ENCODE measurements at regions of chr17 and their contacts with region 1.

Region 1: DNA sequence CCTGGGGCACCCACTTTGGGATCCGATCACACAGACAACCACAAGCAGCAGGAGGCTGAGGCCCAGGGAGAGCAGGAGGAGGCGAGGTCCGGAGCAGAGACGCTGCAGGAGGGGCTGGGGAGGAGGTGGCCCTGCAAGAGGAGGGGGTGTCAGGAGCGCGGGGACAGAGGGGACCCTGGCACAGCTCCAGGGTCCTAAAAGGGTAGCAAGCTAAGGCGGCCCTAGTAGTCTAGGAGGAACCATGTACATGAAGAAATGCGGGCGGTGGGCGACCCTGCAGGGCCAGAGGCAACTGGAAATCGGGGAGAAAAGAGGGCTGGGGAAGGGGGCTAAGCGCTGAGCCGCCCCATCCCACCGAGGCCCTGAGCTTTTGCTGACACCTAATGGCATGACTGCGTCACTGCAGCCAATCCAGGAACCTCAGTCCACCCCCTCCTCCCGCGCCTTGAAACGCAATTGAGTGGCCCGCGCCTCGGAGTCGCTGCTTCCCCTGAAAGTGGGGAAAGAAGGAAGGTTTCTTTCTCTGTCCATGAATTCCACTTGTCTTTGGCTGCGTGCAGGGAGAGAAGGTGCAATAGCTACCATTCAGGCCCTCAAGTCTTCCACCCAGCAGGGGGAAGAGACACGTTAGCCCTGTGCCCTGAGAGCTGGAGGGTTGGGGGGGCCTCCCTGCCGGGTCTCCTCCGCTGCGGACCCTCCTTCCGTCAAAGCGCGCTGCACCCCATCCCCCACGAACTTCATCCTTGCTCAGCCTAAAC is 1.8 kb downstream of the ASGR1 start:
- DNase-seq: peak; percentile 72
- ATAC-seq: peak; percentile 49
- H3K4me3 ChIP-seq: peak overlapping the region; percentile 73 to 93 (median 84)
- H3K27ac ChIP-seq: peak overlapping the region; percentile 98
- H3K4me1 ChIP-seq: peaks cover 51% of the 10 kb centered on the region
- H3K27me3 ChIP-seq: no peaks in the 10 kb centered on the region; a peak in 1 of 5 replicates
- CTCF ChIP-seq: peak; percentile 90
- EP300 ChIP-seq: no peak
- POLR2A ChIP-seq: peak; percentile 13 to 38; a peak in 1 of 4 replicates
- RAD21 ChIP-seq: peak; percentile 80

Region 2: GRCh38 chr17:7035591-7036368 is 141.6 kb before region 1 on chr17 and contains the start of gene SLC16A13:
- CTCF ChIA-PET with region 1: no interaction called
- POLR2A ChIA-PET with region 1: interaction called, 11 read pairs
- in situ Hi-C with region 1: no loop called
- intact Hi-C with region 1: no loop called
- DNase-seq: peak; percentile 97
- ATAC-seq: peak; percentile 81
- H3K4me3 ChIP-seq: peak within 1 kb of the TSS; percentile 75 to 97 (median 94)
- H3K27ac ChIP-seq: peak within 1 kb of the TSS; percentile 90
- H3K4me1 ChIP-seq: peaks cover 41% of the 10 kb centered on the region
- H3K27me3 ChIP-seq: no peaks in the 10 kb centered on the region; a peak in 2 of 5 replicates
- CTCF ChIP-seq: no peak; the same call in 1 of the 2 replicates
- EP300 ChIP-seq: no peak
- POLR2A ChIP-seq: peak; percentile 78 to 93
- RAD21 ChIP-seq: no peak
- total RNA-seq, gene SLC16A13: 1.9 and 3.0 TPM in 2 replicates

Region 3: DNA sequence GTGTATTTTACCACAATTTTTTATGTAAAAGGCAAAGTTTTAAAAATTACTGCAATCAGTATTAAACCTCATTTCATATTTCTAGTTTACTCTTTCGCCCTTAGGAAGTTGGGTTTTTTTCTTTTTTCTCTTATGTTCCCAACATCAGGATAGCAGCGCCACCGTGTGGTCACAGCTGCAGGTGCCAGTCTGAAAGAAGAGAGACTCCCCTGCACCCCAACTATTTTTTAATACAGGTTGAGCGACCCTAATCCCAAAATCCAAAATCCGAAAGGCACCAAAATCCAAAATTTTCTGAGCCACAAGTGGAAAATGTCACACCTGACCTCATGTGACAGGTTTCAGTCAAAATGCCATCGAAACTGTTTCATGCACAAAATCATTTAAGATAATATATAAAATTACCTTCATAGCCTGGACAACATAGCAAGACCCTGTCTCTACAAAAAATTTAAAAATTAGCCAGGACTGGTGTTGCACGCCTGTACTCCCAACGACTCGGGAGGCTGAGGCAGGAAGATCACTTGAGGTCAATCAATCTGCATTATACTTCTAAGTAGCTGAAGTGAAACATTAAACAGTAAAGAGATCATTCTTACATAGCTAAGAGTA is 41.0 kb before region 1 on chr17:
- CTCF ChIA-PET with region 1: interaction called, 4 read pairs
- POLR2A ChIA-PET with region 1: interaction called, 19 read pairs
- in situ Hi-C with region 1: no loop called
- intact Hi-C with region 1: loop called (anchors 5 kb)
- DNase-seq: peak; percentile 63
- ATAC-seq: no peak
- H3K4me3 ChIP-seq: peak overlapping the region; percentile 24 to 50 (median 30)
- H3K27ac ChIP-seq: peak overlapping the region; percentile 66
- H3K4me1 ChIP-seq: peaks cover 70% of the 10 kb centered on the region
- H3K27me3 ChIP-seq: no peaks in the 10 kb centered on the region
- CTCF ChIP-seq: peak; percentile 81
- EP300 ChIP-seq: no peak
- POLR2A ChIP-seq: no peak
- RAD21 ChIP-seq: peak; percentile 89

Region 4: DNA sequence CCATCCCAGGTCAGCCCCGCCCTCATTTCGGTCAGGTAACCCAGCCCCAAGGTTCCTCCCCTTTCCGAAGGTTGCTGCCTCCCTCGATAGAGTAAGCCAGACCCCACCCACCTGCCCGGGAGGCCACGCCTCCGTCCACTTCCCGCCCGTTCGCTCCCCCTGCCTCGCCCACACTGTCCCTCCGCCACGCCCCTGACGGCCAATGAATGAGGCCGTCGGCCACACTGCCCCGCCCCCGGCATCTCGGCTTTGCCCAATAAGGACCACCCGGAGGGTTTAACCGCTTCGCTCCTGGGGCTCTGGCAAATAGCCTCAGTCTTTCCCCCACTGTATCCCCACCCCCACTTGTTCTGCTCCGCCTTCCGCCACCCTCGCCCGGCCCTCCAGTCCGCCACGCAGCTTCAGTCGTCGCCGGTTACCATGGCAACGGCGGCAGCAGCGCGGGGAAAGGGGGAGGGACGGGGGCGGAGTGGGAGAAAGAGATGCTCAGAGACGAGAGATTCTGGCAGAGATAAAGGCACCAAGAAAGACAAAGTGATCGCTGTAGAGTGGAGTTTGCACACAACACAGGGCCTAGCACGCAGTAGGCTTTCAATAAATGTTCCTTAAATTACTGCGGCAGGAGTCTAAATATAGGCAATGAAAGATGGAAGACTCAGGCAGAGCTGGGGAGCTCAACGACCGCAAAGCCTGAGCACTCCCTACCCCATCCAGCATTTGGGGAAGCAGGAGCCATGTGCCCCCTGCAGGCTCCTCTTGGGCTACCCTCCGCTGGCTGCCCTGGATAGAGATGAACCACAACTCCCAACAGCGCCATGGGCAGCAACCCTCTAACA is 37.1 kb after region 1 on chr17:
- CTCF ChIA-PET with region 1: no interaction called
- POLR2A ChIA-PET with region 1: interaction called, 76 read pairs
- in situ Hi-C with region 1: loop called (anchors 5 kb)
- intact Hi-C with region 1: loop called (anchors 5 kb)
- DNase-seq: peak; percentile 95
- ATAC-seq: peak; percentile 88
- H3K4me3 ChIP-seq: peak overlapping the region; percentile 29 to 68 (median 55)
- H3K27ac ChIP-seq: peak overlapping the region; percentile 53
- H3K4me1 ChIP-seq: peaks cover 56% of the 10 kb centered on the region
- H3K27me3 ChIP-seq: peaks cover 0 to 4% of the 10 kb centered on the region in 2 experiments; a peak in 2 of 5 replicates
- CTCF ChIP-seq: peak; percentile 79
- EP300 ChIP-seq: no peak
- POLR2A ChIP-seq: no peak
- RAD21 ChIP-seq: peak; percentile 56

Region 5: DNA sequence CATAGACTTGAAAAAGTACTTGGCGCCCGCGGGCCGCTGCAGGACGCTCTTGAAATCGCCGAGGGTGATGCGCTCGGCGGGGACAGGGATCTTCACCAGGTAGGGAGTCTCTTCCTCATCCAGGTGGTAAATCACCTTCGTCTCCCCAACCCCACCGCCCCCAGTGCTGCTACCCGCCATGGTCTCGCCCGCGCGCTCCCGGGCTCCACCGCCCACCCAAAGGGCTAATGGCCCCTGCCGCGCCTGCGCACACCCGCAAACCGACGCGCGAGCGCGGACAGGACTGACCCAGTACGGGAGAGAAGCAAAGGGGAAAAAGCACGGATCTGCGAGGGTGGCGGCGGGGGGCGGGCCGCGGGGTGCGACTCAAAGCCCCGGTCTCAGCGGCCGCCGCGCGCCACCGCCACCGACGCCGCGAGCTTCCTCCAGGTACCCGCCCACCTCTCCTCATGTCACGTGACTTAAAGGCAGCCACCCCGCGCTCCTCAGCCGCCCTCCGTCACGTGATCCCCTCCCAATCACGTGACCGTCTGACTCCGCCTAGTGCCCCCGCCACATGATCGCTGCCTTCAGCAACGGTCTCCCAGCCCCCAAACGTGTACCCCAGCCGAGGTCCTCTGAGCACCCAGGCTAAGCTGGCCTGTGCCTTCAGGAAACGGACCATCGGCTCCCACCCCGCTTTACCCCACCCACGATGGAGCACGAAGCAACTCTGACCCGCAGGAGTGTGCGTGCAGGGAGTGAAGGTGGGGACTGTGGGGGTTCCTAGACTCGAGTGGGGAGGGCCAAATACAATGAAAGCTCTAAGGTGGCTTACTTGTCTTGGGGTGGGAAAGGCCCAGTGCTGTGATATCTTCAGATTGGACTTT is 56.9 kb after region 1 on chr17 and contains the start of gene DVL2:
- CTCF ChIA-PET with region 1: no interaction called
- POLR2A ChIA-PET with region 1: interaction called, 19 read pairs
- in situ Hi-C with region 1: no loop called
- intact Hi-C with region 1: loop called (anchors 10 kb)
- DNase-seq: peak; percentile 88
- ATAC-seq: peak; percentile 62
- H3K4me3 ChIP-seq: peak within 1 kb of the TSS; percentile 66 to 93 (median 89)
- H3K27ac ChIP-seq: peak within 1 kb of the TSS; percentile 79
- H3K4me1 ChIP-seq: peaks cover 53% of the 10 kb centered on the region
- H3K27me3 ChIP-seq: no peaks in the 10 kb centered on the region; a peak in 1 of 5 replicates
- CTCF ChIP-seq: no peak; the same call in 1 of the 2 replicates
- EP300 ChIP-seq: peak in 1 of 2 experiments; percentile 56; a peak in 2 of 4 replicates
- POLR2A ChIP-seq: peak; percentile 45 to 93; a peak in 3 of 4 replicates
- RAD21 ChIP-seq: peak; percentile 75
- total RNA-seq, gene DVL2: 27.2 and 38.2 TPM in 2 replicates